SK-N-SH (cell line): ENCODE measurements at regions of chr9 and their contacts with region 1.

Region 1: DNA sequence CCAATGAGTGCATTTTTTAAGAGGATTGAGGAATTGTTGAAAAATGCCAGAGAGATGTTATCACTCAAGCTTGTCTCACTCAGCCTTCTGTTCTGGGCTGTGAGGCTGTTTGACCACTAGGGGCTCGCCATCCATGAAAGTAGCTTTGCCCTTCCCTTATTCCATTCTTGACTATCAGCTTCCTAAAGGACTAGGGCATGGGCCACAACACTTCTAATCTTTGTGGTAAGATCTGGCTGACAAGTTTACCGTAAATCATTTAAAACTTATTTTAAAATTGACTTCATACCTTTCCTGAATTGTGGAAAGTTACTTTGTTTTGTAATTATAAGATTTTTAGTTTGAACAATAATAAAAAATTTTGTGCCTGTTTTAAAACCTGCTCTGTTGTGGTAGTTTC is 49.5 kb downstream of the TJP2 start:
- DNase-seq: peak; percentile 73
- H3K4me3 ChIP-seq: no peak overlapping the region; a peak in 1 of 4 replicates
- H3K27ac ChIP-seq: peak overlapping the region in 1 of 2 experiments; percentile 24; a peak in 1 of 4 replicates
- H3K4me1 ChIP-seq: peaks cover 0 to 2% of the 10 kb centered on the region in 2 experiments; a peak in 1 of 4 replicates
- H3K27me3 ChIP-seq: no peaks in the 10 kb centered on the region
- CTCF ChIP-seq: peak; percentile 86
- EP300 ChIP-seq: no peak
- RAD21 ChIP-seq: peak; percentile 45; the same call in 1 of the 2 replicates

Region 2: GRCh38 chr9:69249337-69249736 is 25.7 kb after region 1 on chr9:
- CTCF ChIA-PET with region 1: interaction called, 10 read pairs
- POLR2A ChIA-PET with region 1: no interaction called
- DNase-seq: no peak
- H3K4me3 ChIP-seq: no peak overlapping the region
- H3K27ac ChIP-seq: no peak overlapping the region
- H3K4me1 ChIP-seq: no peaks in the 10 kb centered on the region
- H3K27me3 ChIP-seq: no peaks in the 10 kb centered on the region
- CTCF ChIP-seq: no peak
- EP300 ChIP-seq: no peak
- RAD21 ChIP-seq: no peak